Heart left ventricle (tissue), 16 donors: ENCODE measurements at regions of chr7 and their contacts with region 1.

Region 1: GRCh38 chr7:85882335-85882734 is 695.5 kb upstream of the SEMA3D start:
- DNase-seq: no peak
- ATAC-seq: no peak
- H3K4me3 ChIP-seq: no peak overlapping the region
- H3K27ac ChIP-seq: no peak overlapping the region
- H3K4me1 ChIP-seq: no peaks in the 10 kb centered on the region
- H3K27me3 ChIP-seq: no peaks in the 10 kb centered on the region
- CTCF ChIP-seq: no peak
- POLR2A ChIP-seq: no peak

Region 2: GRCh38 chr7:86050918-86051317 is 168.6 kb after region 1 on chr7:
- intact Hi-C with region 1: no loop called
- DNase-seq: no peak
- ATAC-seq: no peak
- H3K4me3 ChIP-seq: no peak overlapping the region
- H3K27ac ChIP-seq: no peak overlapping the region
- H3K4me1 ChIP-seq: no peaks in the 10 kb centered on the region
- H3K27me3 ChIP-seq: no peaks in the 10 kb centered on the region
- CTCF ChIP-seq: no peak
- POLR2A ChIP-seq: no peak

Region 3: DNA sequence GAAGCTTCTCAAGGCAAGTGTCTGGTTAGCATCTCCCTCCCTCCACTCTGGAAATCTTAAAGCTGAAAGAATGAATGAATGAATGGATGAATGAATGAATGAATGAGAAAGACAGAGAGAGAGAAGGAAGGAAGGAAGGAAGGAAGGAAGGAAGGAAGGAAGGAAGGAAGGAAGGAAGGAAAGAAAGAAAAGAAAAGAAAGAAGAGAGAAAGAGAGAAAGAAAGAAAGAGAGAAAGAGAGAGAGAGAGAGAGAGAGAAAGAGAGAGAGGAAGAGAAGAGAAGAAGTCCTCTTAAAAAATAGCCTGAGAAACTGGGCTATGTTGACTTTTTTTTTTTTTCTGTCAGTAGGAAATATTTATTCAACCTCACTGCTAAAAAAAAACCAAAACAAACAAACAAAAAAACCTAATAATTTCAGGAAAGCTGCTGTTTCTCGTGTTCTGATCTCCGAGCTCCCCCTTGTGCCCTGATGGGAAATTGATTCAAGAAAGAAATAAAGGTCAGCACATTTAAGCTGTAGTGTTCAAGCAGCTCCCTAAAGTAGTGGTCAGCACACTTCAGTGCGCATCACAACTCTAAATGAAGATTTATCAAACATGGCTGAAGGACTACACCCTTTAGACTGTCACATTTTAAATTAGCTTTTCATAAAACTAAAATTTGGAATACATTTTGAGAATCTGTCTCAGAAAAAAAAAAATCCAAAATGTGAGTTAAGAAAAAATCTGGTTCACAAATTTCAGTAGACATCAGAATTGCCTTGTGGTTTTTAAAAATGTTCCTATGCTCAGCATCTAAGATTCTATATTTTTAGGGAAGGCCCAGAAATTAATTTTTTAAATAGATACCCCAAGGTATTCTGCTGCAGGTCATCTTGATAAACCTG is 1022.9 kb after region 1 on chr7:
- intact Hi-C with region 1: loop called in 2 of 10 experiments (anchors 5 to 10 kb)
- DNase-seq: no peak
- ATAC-seq: no peak
- H3K4me3 ChIP-seq: no peak overlapping the region
- H3K27ac ChIP-seq: no peak overlapping the region
- H3K4me1 ChIP-seq: no peaks in the 10 kb centered on the region
- H3K27me3 ChIP-seq: no peaks in the 10 kb centered on the region
- CTCF ChIP-seq: peak in 11 of 12 donors; percentile 17 to 62 (median 43)
- POLR2A ChIP-seq: no peak